Pancreas (tissue), 10 donors: ENCODE measurements at regions of chr11 and their contacts with region 1.

Region 1: GRCh38 chr11:85602526-85603213 is 24.5 kb downstream of the DLG2 start:
- DNase-seq: no peak
- ATAC-seq: no peak
- H3K4me3 ChIP-seq: no peak overlapping the region
- H3K27ac ChIP-seq: no peak overlapping the region
- H3K4me1 ChIP-seq: no peaks in the 10 kb centered on the region
- H3K27me3 ChIP-seq: no peaks in the 10 kb centered on the region
- CTCF ChIP-seq: no peak

Region 2: DNA sequence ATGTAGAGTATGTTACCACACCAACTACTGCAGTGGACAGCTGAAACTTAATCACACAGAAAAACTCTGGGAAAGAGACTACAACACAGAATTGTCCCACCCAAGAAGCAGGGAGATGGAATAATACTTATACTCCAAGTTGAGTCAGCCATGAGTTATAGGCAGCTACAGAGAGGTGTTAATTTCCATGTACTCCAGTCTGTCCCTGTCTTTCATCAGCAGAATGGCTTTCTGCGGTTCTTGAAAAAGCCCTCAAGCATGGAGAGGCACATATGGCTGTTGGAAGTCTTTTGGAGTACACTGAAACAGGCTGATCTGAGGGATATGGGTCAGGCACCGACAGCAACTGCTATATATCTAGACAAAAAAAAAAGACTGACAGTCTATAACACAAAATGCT is 195.0 kb before region 1 on chr11:
- intact Hi-C with region 1: no loop called
- DNase-seq: no peak
- ATAC-seq: no peak
- H3K4me3 ChIP-seq: no peak overlapping the region
- H3K27ac ChIP-seq: no peak overlapping the region
- H3K4me1 ChIP-seq: no peaks in the 10 kb centered on the region
- H3K27me3 ChIP-seq: no peaks in the 10 kb centered on the region
- CTCF ChIP-seq: no peak

Region 3: DNA sequence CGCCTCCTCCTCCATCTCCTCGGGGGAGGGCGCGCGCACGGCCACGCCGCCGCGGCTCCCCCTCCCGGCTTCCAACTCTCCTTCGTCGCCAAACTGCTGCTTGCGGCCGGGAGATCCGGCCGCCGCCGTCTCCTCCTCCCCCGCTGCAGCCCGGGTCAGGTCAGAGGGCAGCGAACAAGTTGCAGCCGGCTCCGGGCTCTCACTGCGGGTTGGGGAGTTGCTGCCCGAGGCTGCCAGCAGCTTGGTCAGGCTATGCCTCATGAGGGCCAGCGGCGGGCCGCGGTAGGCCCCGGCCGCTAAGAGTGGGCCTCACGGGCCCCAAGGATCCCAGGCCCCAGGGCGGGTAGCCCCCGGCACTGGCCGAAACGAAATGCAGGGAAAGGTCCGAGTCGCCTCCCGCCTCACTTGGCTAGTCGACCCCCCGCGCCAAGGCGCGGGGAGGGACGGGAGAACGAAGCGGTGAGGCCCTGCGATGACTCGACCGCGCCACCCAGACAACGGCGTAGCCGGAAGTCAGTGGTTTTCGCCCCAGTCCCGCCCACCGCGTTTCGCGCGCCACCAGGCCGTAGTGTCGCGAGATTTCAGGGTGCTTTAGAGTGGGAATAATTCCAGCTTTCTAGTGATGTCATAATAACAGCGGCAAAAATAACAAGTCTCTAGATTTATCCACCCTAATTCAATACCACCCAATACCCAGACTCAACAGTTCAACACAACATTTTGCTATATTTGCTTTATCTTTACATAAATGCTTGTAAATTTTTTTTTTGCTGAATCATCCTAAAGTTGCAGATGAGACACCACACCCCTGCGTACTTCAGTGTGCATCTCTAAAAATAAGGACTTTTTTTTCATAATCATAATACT is 62.2 kb after region 1 on chr11 and contains the start of gene CREBZF:
- intact Hi-C with region 1: no loop called
- DNase-seq: peak; percentile 93 to 97 (median 95)
- ATAC-seq: peak; percentile 90 to 97 (median 94)
- H3K4me3 ChIP-seq: peak within 1 kb of the TSS; percentile 66 to 89 (median 78)
- H3K27ac ChIP-seq: peak within 1 kb of the TSS; percentile 97 to 99 (median 98)
- H3K4me1 ChIP-seq: peaks cover 5 to 28% (median 18%) of the 10 kb centered on the region in 3 donors
- H3K27me3 ChIP-seq: no peaks in the 10 kb centered on the region
- CTCF ChIP-seq: no peak
- total RNA-seq, gene CREBZF: 13.7 to 25.8 (median 20.2) TPM

Region 4: GRCh38 chr11:85725510-85726258 is 123.0 kb after region 1 on chr11:
- intact Hi-C with region 1: no loop called
- DNase-seq: no peak
- ATAC-seq: peak in 2 of 4 donors; percentile 39 to 45
- H3K4me3 ChIP-seq: no peak overlapping the region
- H3K27ac ChIP-seq: no peak overlapping the region
- H3K4me1 ChIP-seq: no peaks in the 10 kb centered on the region
- H3K27me3 ChIP-seq: peaks cover 0 to under 1% (median 0%) of the 10 kb centered on the region in 4 donors
- CTCF ChIP-seq: no peak

Region 5: DNA sequence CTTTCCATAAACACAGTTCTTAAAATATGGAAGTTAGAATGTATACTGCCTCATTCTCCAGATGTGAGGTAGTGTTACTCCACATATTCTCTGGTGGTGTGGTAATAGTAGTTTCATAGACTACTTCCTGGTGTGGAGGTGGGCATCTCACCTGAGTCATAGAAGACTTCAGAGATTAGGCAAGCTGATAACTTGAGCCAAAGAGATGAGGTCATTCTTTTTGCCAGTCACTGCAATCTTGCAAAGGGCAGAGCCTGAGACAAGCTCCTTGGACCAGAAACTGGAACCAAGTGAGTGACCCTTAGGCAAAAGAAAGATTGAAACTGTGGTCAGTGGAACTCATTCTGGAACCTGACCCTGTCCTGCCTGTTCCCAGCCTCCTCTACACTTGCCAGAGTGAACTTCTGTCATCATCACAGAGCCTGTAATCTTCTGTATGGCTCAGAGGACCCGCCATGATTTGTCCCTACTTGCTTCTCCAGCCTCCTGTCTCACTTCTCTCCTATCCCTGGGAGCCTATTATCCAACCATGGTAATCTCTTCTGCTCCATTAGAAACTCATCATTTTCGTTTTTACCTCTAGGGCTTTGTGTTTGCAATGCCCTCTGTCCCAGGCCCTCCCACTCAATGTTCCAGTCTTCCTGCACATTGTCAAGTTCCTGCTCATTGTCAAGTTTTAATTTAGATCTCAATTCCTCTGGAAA is 241.9 kb after region 1 on chr11:
- intact Hi-C with region 1: loop called in 1 of 3 experiments (anchors 5 kb)
- DNase-seq: peak in 1 of 6 donors; percentile 23
- ATAC-seq: peak; percentile 93 to 96 (median 94)
- H3K4me3 ChIP-seq: no peak overlapping the region
- H3K27ac ChIP-seq: peak overlapping the region in 2 of 4 donors; percentile 24 to 69
- H3K4me1 ChIP-seq: peaks cover 0 to 7% (median 0%) of the 10 kb centered on the region in 3 donors
- H3K27me3 ChIP-seq: no peaks in the 10 kb centered on the region
- CTCF ChIP-seq: no peak